ENCODE measurements at regions of chr3 and their contacts with region 1.

Region 1: GRCh38 chr3:8622873-8623691 is 21.5 kb downstream of the SSUH2 start:
- DNase-seq: peak; percentile 62
- H3K4me3 ChIP-seq: no peak overlapping the region
- H3K27ac ChIP-seq: no peak overlapping the region
- H3K4me1 ChIP-seq: no peaks in the 10 kb centered on the region
- CTCF ChIP-seq: peak; percentile 88

Region 2: DNA sequence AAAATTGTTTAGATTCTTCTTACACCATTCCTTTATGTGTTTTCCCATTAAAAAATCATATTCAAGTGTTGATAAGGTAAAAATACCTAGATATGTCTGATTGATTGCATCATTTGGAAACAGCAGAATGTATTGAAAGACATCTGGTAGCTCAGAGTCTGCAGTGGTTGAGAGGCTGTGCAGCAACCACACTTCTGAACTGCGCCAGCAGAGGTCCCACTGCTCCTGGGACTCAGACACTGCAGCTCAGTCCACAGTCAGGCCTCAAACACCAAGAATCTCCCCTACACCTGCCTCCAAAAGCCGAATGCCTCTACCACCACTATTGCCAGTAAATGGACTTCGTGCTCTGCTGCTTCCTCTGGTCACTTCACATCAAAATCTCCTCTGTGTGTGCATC is 298.3 kb before region 1 on chr3:
- CTCF ChIA-PET with region 1: no interaction called
- POLR2A ChIA-PET with region 1: no interaction called
- intact Hi-C with region 1: loop called (anchors 2 kb)
- DNase-seq: peak; percentile 47
- H3K4me3 ChIP-seq: no peak overlapping the region
- H3K27ac ChIP-seq: no peak overlapping the region
- H3K4me1 ChIP-seq: no peaks in the 10 kb centered on the region
- CTCF ChIP-seq: peak; percentile 74

Region 3: DNA sequence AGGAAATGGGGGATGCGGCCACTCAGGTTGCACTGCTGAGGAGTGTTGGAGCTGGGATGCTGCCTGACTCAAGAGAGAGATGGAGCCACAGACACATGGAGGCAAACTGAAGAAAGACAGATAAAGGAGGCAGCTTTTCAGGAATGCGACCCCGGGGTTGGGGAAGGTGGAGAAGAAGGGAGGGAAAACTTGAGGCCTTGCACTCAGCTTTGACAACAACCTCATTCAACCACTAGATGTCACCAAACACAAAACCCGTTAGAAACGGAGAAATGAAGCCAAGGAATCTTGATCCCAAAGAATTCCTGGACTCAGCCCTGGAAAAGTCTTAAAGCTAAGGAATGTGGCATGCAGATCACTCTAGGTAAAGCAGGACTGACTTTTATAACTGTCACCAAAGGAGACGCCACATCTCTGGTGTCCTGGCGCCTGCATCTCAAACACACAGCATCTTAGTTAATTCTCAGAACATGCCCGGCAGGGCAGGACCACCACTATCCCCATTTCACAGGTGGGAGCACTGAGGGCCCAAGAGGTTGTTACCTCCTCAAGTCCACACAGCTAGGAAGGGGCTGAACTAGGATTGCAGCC is 181.0 kb before region 1 on chr3:
- CTCF ChIA-PET with region 1: no interaction called
- POLR2A ChIA-PET with region 1: no interaction called
- intact Hi-C with region 1: loop called (anchors 2 kb)
- DNase-seq: peak; percentile 12
- H3K4me3 ChIP-seq: no peak overlapping the region
- H3K27ac ChIP-seq: no peak overlapping the region
- H3K4me1 ChIP-seq: no peaks in the 10 kb centered on the region
- CTCF ChIP-seq: peak; percentile 81

Region 4: DNA sequence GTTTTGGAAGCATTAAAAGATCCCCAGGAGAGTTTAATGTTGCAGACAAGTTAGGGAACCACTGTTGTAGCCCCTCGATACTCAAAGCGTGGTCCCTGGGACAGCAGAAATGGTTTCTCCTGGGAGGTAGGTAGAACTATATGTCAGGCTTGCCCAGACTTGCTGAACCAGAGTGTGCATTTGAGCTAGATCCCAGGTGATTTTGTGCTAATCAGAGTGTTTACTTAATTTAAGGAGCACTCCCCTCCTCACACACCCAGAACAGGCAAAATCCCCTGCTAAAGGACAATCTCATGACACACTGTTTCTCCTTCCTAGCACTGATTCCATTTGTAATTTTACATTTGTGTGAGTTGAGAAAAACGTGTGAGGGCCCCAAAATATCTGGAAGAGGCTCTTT is 97.2 kb before region 1 on chr3:
- CTCF ChIA-PET with region 1: no interaction called
- POLR2A ChIA-PET with region 1: no interaction called
- intact Hi-C with region 1: no loop called
- DNase-seq: no peak
- H3K4me3 ChIP-seq: no peak overlapping the region
- H3K27ac ChIP-seq: no peak overlapping the region
- H3K4me1 ChIP-seq: no peaks in the 10 kb centered on the region
- CTCF ChIP-seq: no peak